ENCODE measurements at regions of chr15 and their contacts with region 1.

Region 1: DNA sequence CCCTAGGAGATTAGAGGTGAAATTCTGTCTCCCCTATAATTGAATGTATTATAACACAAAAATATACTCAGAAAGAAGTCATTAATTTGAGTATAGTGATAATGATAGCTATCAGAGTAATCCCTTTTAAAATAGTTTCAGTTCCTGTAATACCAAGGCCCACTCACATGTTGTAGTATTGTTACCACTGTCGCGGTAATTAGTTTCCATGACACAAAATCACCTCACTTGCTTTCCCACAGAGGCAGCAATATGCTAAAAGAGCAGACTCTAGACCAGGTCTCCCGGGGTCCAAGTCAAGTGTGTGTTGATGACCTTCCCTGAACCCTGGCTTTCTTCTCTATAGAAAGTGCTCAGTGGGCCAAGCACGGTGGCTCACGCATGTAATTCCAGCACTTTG is 39.5 kb upstream of the NSMCE3 start:
- DNase-seq: no peak
- H3K4me3 ChIP-seq: no peak overlapping the region
- H3K27ac ChIP-seq: no peak overlapping the region
- H3K4me1 ChIP-seq: no peaks in the 10 kb centered on the region
- H3K27me3 ChIP-seq: no peaks in the 10 kb centered on the region
- CTCF ChIP-seq: no peak
- POLR2A ChIP-seq: no peak

Region 2: GRCh38 chr15:27479296-27480140 is 1829.6 kb before region 1 on chr15:
- intact Hi-C with region 1: no loop called
- DNase-seq: peak in 1 of 2 donors; percentile 69
- H3K4me3 ChIP-seq: no peak overlapping the region
- H3K27ac ChIP-seq: peak overlapping the region; percentile 25 to 59
- H3K4me1 ChIP-seq: no peaks in the 10 kb centered on the region
- H3K27me3 ChIP-seq: no peaks in the 10 kb centered on the region
- CTCF ChIP-seq: no peak
- POLR2A ChIP-seq: no peak

Region 3: GRCh38 chr15:29289173-29289572 is 20.0 kb before region 1 on chr15:
- intact Hi-C with region 1: loop called (anchors 1 kb)
- DNase-seq: no peak
- H3K4me3 ChIP-seq: no peak overlapping the region
- H3K27ac ChIP-seq: no peak overlapping the region
- H3K4me1 ChIP-seq: no peaks in the 10 kb centered on the region
- H3K27me3 ChIP-seq: no peaks in the 10 kb centered on the region
- CTCF ChIP-seq: no peak
- POLR2A ChIP-seq: no peak